IMR-90 (cell line): ENCODE measurements at regions of chr7 and their contacts with region 1.

Region 1: DNA sequence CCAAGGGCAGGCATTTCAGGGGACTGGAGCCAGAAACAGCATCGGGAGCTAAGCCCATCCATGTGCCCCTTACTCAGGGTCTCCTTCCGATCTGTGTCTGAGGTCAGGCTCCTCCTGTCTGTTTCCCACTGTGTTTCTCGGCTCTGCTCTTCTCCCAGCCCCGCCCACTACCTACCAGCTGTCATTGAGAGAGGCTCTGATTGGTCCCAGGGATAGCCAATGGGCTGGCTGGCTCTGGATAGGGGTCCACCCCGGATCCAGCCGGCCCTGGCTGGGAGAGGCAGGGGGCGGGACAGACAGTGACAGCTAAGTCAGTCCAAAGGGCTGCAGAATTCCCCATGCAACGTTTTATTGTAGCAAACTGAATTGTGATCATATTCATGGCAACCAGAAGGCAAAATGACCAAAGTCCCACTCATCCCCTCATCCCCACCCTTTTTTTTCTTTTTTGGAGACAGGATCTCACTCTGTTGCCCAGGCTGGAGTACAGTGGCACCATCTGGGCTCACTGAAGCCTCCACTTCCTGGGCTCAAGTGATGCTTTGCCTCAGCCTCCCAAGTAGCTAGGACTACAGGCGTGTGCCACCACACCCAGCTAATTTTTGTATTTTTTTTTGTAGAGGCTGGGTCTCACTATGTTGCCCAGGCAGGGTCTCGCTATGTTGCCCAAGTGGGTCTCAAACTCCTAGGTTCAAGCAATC is 76.3 kb downstream of the CLIP2 start:
- DNase-seq: peak; percentile 43
- ATAC-seq: peak; percentile 98
- H3K4me3 ChIP-seq: no peak overlapping the region
- H3K27ac ChIP-seq: no peak overlapping the region
- H3K4me1 ChIP-seq: no peaks in the 10 kb centered on the region
- H3K27me3 ChIP-seq: no peaks in the 10 kb centered on the region
- CTCF ChIP-seq: no peak
- POLR2A ChIP-seq: no peak
- RAD21 ChIP-seq: no peak

Region 2: GRCh38 chr7:74231232-74231590 is 134.3 kb before region 1 on chr7:
- CTCF ChIA-PET with region 1: no interaction called
- POLR2A ChIA-PET with region 1: no interaction called
- dilution Hi-C with region 1: no loop called
- in situ Hi-C with region 1: loop called (anchors 25 kb)
- intact Hi-C with region 1: no loop called
- DNase-seq: no peak
- ATAC-seq: no peak
- H3K4me3 ChIP-seq: no peak overlapping the region
- H3K27ac ChIP-seq: no peak overlapping the region
- H3K4me1 ChIP-seq: peaks cover 9% of the 10 kb centered on the region
- H3K27me3 ChIP-seq: no peaks in the 10 kb centered on the region
- CTCF ChIP-seq: no peak
- POLR2A ChIP-seq: no peak
- RAD21 ChIP-seq: no peak

Region 3: GRCh38 chr7:74355091-74355490 is 10.4 kb before region 1 on chr7:
- CTCF ChIA-PET with region 1: no interaction called
- POLR2A ChIA-PET with region 1: no interaction called
- dilution Hi-C with region 1: no loop called
- in situ Hi-C with region 1: no loop called
- intact Hi-C with region 1: no loop called
- DNase-seq: peak; percentile 88
- ATAC-seq: peak; percentile 87
- H3K4me3 ChIP-seq: no peak overlapping the region
- H3K27ac ChIP-seq: peak overlapping the region; percentile 6; the same call in 1 of the 2 replicates
- H3K4me1 ChIP-seq: peaks cover 4% of the 10 kb centered on the region
- H3K27me3 ChIP-seq: no peaks in the 10 kb centered on the region
- CTCF ChIP-seq: no peak
- POLR2A ChIP-seq: no peak
- RAD21 ChIP-seq: no peak

Region 4: GRCh38 chr7:74466196-74466813 is 100.8 kb after region 1 on chr7:
- CTCF ChIA-PET with region 1: no interaction called
- POLR2A ChIA-PET with region 1: no interaction called
- dilution Hi-C with region 1: no loop called
- in situ Hi-C with region 1: no loop called
- intact Hi-C with region 1: no loop called
- DNase-seq: no peak
- ATAC-seq: no peak
- H3K4me3 ChIP-seq: no peak overlapping the region
- H3K27ac ChIP-seq: no peak overlapping the region
- H3K4me1 ChIP-seq: no peaks in the 10 kb centered on the region
- H3K27me3 ChIP-seq: no peaks in the 10 kb centered on the region
- CTCF ChIP-seq: no peak
- POLR2A ChIP-seq: no peak
- RAD21 ChIP-seq: no peak